Activated T-helper 1 cell treated with anti-CD3 and anti-CD28 coated beads, Interleukin-12 subunit alpha, Interleukin-12 subunit beta, Interleukin-2, Interleukin-4 antibody, amounts not matched to agents 30 ng/mL and 10 ng/mL and 1 ng/mL, durations not matched to agents 14 hours and 24 hours and 36 hours (primary cell): ENCODE measurements at regions of chr16 and their contacts with region 1.

Region 1: GRCh38 chr16:442976-443375 is 17.5 kb downstream of the RAB11FIP3 start:
- DNase-seq: no peak
- H3K4me3 Mint-ChIP-seq: no peak overlapping the region
- H3K27ac Mint-ChIP-seq: no peak overlapping the region
- H3K4me1 Mint-ChIP-seq: peaks cover 4% of the 10 kb centered on the region
- H3K27me3 Mint-ChIP-seq: no peaks in the 10 kb centered on the region

Region 2: DNA sequence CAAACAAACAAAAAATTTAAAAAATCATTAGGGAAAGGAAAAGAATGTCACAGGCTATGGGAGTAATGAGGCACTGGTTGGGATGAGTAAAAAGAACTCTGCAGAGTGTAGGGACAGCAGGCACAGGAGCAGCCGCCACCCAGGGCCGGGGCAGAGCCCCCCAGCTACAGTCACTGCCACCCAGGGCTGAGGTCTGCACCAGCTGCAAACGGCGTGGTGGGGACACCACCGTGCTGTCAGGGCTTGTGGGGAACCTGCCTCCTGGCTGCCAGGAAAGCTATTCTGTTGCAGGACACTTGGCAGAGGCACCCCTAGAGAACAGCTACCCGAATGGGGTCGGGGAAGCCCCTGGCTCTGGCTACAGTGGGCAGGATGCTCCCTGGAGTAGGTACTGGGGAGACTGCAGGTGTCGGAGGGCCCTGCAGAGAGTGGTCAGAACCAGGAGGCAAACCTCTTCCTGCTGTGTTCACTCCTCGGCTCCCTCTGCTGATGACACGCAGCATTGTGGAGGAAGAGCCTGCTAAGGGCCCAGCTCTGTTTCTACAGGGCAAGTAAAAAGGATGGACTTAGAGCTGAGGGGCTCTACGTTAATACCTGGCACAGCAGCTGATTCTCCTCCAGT is 52.3 kb after region 1 on chr16:
- intact Hi-C with region 1: loop called (anchors 10 kb)
- DNase-seq: no peak
- H3K4me3 Mint-ChIP-seq: no peak overlapping the region
- H3K27ac Mint-ChIP-seq: no peak overlapping the region
- H3K4me1 Mint-ChIP-seq: no peaks in the 10 kb centered on the region
- H3K27me3 Mint-ChIP-seq: no peaks in the 10 kb centered on the region

Region 3: DNA sequence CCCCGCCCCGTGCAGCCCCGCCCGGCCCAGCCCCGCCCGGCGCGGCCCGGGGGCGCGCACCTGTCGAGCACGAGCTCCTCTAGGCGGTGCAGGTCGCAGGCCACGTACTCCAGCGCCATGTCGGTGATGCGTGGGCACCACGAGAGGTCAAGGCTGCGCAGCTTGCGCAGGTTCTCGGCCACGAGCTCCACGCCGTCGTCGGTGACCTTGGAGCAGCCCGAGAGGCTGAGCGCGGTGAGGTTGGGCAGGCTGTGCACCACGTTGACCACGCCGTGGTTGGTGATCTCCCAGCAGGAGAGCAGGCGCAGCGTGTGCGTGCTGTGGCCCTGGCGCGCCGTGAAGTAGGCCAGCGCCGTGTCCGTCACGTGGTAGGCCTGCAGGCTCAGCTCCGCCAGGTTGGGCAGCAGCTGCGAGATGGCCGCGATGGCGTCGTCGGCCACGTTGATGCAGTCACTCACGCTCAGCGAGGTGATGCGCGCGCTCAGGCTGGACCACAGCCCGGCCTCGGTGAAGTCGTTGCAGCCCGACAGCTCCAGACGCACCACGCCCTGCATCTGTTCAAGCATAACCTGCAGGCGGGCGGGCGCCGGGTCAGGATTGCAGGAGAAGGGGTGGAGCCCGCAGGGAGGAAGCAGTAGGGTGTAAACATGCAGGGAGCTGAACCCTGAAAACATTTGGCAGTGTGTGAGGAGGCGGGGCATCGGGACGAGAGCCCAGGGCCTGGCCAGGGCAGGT is 252.5 kb after region 1 on chr16:
- intact Hi-C with region 1: no loop called
- DNase-seq: peak; percentile 66
- H3K4me3 Mint-ChIP-seq: peak overlapping the region; percentile 80
- H3K27ac Mint-ChIP-seq: peak overlapping the region; percentile 74
- H3K4me1 Mint-ChIP-seq: peaks cover 13% of the 10 kb centered on the region
- H3K27me3 Mint-ChIP-seq: peaks cover 13% of the 10 kb centered on the region